Adrenal gland (tissue), 19 donors: ENCODE measurements at regions of chr14 and their contacts with region 1.

Region 1: GRCh38 chr14:86462193-86462753 is 932.3 kb downstream of the FLRT2 start:
- DNase-seq: peak in 5 of 7 donors; percentile 9 to 33 (median 28)
- H3K4me3 ChIP-seq: no peak overlapping the region
- H3K27ac ChIP-seq: no peak overlapping the region
- H3K4me1 ChIP-seq: no peaks in the 10 kb centered on the region
- H3K27me3 ChIP-seq: no peaks in the 10 kb centered on the region
- CTCF ChIP-seq: peak; percentile 14 to 44 (median 40)
- POLR2A ChIP-seq: no peak

Region 2: GRCh38 chr14:86321151-86321550 is 141.1 kb before region 1 on chr14:
- intact Hi-C with region 1: no loop called
- DNase-seq: no peak
- H3K4me3 ChIP-seq: no peak overlapping the region
- H3K27ac ChIP-seq: no peak overlapping the region
- H3K4me1 ChIP-seq: no peaks in the 10 kb centered on the region
- H3K27me3 ChIP-seq: no peaks in the 10 kb centered on the region
- CTCF ChIP-seq: no peak
- POLR2A ChIP-seq: no peak

Region 3: DNA sequence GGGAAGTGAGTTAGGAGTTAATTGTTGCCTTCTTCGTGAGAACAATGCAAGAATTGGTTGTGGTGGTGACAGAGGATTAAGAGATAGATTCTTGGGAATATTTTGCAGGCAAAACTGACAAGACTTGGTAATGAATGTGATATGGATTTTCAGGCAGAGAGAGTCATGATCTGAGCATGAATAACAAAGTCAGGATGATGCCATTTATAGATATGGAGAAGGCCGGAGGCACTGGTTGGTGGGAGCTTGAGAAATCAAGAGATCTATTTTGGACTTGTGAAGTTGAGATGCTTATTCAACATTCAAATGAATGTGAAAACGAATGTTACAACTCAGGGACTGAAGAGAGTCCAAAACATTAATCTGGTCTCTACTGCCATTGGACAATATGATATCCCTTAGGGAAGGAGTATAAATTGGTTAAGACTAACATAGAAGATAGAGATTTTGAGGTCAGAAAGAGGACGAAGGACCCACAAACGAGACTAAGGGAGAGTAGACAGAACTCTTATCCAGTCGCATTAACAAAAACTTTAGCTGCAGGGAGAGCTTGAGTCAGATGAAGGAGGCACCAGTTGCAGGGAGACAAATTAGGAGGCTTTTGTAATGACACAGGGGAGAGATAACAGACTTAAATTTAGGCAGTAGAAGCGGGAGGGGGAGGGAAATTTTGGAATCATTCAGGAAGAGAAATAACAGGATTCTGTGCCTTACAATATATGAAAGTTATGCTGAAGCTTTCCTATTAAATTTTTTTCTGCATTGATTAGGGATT is 440.1 kb after region 1 on chr14:
- intact Hi-C with region 1: loop called in 1 of 2 experiments (anchors 5 kb)
- DNase-seq: no peak
- H3K4me3 ChIP-seq: no peak overlapping the region
- H3K27ac ChIP-seq: no peak overlapping the region
- H3K4me1 ChIP-seq: no peaks in the 10 kb centered on the region
- H3K27me3 ChIP-seq: no peaks in the 10 kb centered on the region
- CTCF ChIP-seq: no peak
- POLR2A ChIP-seq: no peak